CD4-positive, alpha-beta T cell (primary cell): ENCODE measurements at regions of chr14 and their contacts with region 1.

Region 1: DNA sequence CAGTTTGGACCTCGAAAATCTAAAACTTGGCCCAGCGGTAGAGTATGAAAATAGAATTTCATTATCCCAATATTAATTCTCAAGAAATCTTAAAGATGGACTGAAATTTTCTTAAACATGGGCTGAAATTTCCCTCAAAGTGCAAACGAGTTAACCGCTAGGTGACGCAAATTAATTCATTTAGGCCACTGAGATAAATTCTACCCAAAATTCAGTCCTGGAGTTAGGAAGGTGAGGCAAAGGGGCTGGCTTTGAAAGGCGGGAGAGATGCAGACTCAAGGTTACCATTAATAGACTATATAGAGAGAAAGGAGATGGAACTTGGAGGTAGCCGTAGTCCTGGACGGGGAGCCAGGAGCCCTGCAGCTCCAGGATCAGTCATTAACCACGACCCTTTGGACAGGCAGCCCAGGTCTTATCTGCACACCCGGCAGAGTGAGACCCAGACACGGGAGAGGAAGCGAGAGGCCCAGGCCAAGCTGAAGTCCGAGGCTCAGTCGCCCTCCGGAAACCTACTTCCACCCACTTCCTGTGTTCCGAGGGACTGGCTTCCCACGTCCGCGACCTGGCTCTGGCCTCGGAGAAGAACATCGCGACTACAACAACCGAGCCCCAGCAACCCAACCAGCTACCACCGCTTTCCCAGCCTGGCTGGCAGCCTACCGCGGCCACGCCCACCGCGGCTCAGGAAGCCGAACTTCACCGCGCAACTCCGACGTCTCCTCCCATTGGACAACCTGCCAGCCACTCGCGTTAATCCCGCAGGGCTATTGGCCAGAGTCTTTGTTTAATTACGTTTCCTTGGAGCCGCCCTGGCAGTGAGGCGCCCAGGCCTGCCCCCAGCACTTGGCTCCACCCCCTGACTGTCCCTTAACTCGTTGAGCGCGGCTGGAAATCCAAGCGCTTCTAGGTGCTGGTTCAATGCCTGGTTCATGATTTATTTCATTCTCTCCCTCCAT is at the start of gene EFCAB11:
- DNase-seq: peak; percentile 88 to 99 (median 92)
- ATAC-seq: peak; percentile 81
- H3K4me3 ChIP-seq: peak within 1 kb of the TSS; percentile 74
- H3K4me3 Mint-ChIP-seq: peak within 1 kb of the TSS; percentile 88
- H3K27ac ChIP-seq: peak within 1 kb of the TSS in 1 of 2 donors; percentile 40
- H3K27ac Mint-ChIP-seq: peak within 1 kb of the TSS; percentile 99
- H3K4me1 ChIP-seq: peaks cover 38% of the 10 kb centered on the region
- H3K4me1 Mint-ChIP-seq: peaks cover 39% of the 10 kb centered on the region
- H3K27me3 ChIP-seq: no peaks in the 10 kb centered on the region
- H3K27me3 Mint-ChIP-seq: no peaks in the 10 kb centered on the region
- CTCF ChIP-seq: no peak
- total RNA-seq, gene EFCAB11: 0.36 to 0.47 TPM

Region 2: DNA sequence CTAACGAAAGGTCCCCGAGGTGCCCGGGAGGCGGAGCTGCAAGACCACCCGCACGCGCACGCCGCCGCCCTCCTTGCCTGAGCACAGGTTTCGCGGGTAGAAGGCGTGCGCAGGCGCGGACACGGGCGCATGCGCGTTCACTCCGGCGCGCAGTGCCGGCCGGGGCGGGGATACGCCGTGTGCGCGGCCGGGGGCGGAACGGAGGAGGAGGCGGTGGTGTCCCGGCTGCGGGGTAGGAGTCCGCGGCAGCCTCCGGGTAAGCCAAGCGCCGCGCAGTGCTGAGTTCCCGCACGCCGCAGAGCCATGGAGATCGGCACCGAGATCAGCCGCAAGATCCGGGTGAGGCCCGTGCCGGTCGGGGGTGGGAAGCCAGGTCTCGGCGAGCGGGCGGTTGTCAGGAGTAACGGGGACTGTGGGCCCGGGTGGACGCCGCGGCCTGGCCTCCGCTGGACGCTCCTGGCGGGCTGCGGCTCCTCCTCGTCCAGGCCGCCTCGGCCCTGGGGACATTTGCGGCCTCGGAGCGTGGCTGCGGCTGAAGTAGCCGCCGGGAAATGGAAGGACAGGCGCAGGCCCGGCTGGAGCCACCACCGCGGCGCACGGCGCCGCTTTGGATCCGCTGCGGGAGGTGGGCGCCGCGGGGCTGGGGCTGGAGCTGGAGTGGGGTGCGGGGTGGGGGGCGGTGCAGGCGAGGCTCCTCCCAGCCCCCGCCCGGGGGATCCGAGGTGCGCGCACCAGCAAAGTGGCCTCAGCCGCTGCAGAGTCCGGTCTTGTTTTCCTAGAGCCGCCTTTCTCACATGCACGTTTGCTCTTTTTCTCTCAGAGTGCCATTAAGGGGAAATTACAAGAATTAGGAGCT is 1391.3 kb before region 1 on chr14 and contains the start of gene ZC3H14:
- CTCF ChIA-PET with region 1: no interaction called
- POLR2A ChIA-PET with region 1: no interaction called
- intact Hi-C with region 1: loop called in 1 of 2 experiments (anchors 10 kb)
- DNase-seq: peak; percentile 73 to 95 (median 84)
- ATAC-seq: peak; percentile 96
- H3K4me3 ChIP-seq: peak within 1 kb of the TSS; percentile 77
- H3K4me3 Mint-ChIP-seq: peak within 1 kb of the TSS; percentile 97
- H3K27ac ChIP-seq: peak within 1 kb of the TSS in 1 of 2 donors; percentile 35
- H3K27ac Mint-ChIP-seq: peak within 1 kb of the TSS; percentile 67
- H3K4me1 ChIP-seq: peaks cover 13% of the 10 kb centered on the region
- H3K4me1 Mint-ChIP-seq: peaks cover 37% of the 10 kb centered on the region
- H3K27me3 ChIP-seq: no peaks in the 10 kb centered on the region
- H3K27me3 Mint-ChIP-seq: peaks cover 8% of the 10 kb centered on the region
- CTCF ChIP-seq: no peak
- total RNA-seq, gene ZC3H14: 36.5 to 40.2 TPM

Region 3: GRCh38 chr14:89416002-89416995 is 538.0 kb before region 1 on chr14:
- CTCF ChIA-PET with region 1: no interaction called
- POLR2A ChIA-PET with region 1: no interaction called
- intact Hi-C with region 1: loop called (anchors 1 to 5 kb)
- DNase-seq: peak; percentile 97 to 100 (median 99)
- ATAC-seq: peak; percentile 73
- H3K4me3 ChIP-seq: peak overlapping the region; percentile 71
- H3K4me3 Mint-ChIP-seq: peak overlapping the region; percentile 96
- H3K27ac ChIP-seq: peak overlapping the region; percentile 51 to 62
- H3K27ac Mint-ChIP-seq: peak overlapping the region; percentile 96
- H3K4me1 ChIP-seq: peaks cover 26% of the 10 kb centered on the region
- H3K4me1 Mint-ChIP-seq: peaks cover 71% of the 10 kb centered on the region
- H3K27me3 ChIP-seq: no peaks in the 10 kb centered on the region
- H3K27me3 Mint-ChIP-seq: no peaks in the 10 kb centered on the region
- CTCF ChIP-seq: no peak

Region 4: GRCh38 chr14:89915114-89915878 is 39.1 kb before region 1 on chr14:
- CTCF ChIA-PET with region 1: no interaction called
- POLR2A ChIA-PET with region 1: no interaction called
- intact Hi-C with region 1: no loop called
- DNase-seq: peak; percentile 33 to 77 (median 54)
- ATAC-seq: peak; percentile 72
- H3K4me3 ChIP-seq: no peak overlapping the region
- H3K4me3 Mint-ChIP-seq: no peak overlapping the region
- H3K27ac ChIP-seq: no peak overlapping the region
- H3K27ac Mint-ChIP-seq: no peak overlapping the region
- H3K4me1 ChIP-seq: no peaks in the 10 kb centered on the region
- H3K4me1 Mint-ChIP-seq: peaks cover 4% of the 10 kb centered on the region
- H3K27me3 ChIP-seq: no peaks in the 10 kb centered on the region
- H3K27me3 Mint-ChIP-seq: peaks cover 13% of the 10 kb centered on the region
- CTCF ChIP-seq: peak; percentile 98

Region 5: DNA sequence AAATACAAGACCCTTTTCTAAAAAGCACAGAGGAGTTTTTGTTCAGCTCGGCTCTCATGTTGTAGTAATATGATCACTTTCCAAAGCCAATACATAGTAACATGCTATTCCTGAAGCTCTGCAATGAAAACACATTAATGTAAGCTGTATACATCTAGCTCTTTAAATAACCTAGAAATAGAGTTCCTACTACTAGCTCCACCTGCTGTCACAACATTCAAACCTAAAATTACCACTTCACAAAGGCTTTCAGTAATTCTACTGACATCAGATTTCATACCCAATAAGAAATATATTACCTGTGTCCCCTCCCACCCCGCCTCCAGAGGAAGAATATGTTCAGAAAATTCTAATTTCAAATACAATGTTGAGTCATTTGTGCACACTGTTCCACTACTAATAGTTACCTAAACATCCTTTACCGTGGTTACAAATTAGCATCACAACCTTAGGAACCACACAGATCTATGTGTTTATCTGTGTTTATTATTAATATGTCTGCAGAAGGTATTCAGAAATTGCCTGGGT is 17.6 kb before region 1 on chr14:
- CTCF ChIA-PET with region 1: interaction called, 21 read pairs
- POLR2A ChIA-PET with region 1: interaction called, 4 read pairs
- intact Hi-C with region 1: no loop called
- DNase-seq: no peak
- ATAC-seq: no peak
- H3K4me3 ChIP-seq: no peak overlapping the region
- H3K4me3 Mint-ChIP-seq: no peak overlapping the region
- H3K27ac ChIP-seq: no peak overlapping the region
- H3K27ac Mint-ChIP-seq: no peak overlapping the region
- H3K4me1 ChIP-seq: no peaks in the 10 kb centered on the region
- H3K4me1 Mint-ChIP-seq: no peaks in the 10 kb centered on the region
- H3K27me3 ChIP-seq: no peaks in the 10 kb centered on the region
- H3K27me3 Mint-ChIP-seq: no peaks in the 10 kb centered on the region
- CTCF ChIP-seq: no peak

Region 6: DNA sequence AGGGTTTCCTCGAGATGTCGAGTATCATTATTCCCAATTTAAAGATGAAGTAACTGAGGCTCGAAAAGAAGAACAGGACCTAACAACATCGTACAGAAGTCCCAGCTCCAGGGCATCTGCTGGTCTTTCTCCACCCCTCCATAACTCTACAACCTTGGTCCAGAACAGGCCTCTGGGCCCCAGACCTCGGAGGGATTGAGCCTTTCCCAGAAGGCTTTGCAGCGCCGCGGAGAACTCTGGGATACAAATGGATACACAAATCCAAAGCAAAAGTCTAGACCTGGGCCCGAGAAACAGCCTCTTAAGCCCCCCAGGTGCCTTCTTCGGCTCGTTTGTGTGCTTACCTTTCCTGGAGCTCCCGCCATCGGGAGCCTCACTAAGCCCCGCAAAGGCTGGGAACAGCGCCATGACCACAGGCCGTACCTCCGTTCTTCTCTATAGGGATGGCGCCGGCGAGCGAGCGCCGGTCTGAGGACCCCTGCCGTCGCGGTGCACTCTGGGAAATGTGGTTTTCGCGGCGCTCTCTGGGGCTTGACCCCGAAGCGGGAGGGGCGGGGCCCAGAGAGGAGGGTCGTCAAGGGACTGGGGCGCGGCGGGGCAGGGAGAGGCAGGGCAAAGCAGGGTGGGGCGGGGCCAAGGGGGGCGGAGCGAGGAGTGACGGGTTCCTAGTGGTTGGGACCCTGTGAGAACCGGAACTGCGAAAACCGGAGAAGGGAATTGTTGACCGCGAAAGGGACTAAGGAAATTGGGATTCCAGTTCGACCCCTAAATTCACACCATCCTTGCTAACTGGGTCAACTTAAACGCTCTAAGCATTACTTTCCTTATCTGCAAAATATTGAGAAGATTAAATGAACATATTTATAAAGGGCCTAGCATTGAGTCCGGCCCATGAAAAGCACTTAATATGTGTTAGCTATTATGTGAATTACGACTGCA is 377.4 kb after region 1 on chr14 and contains the start of gene NRDE2:
- CTCF ChIA-PET with region 1: no interaction called
- POLR2A ChIA-PET with region 1: no interaction called
- intact Hi-C with region 1: loop called in 1 of 2 experiments (anchors 5 kb)
- DNase-seq: peak; percentile 81 to 99 (median 93)
- ATAC-seq: peak; percentile 95
- H3K4me3 ChIP-seq: peak within 1 kb of the TSS; percentile 83
- H3K4me3 Mint-ChIP-seq: peak within 1 kb of the TSS; percentile 93
- H3K27ac ChIP-seq: peak within 1 kb of the TSS; percentile 60 to 72
- H3K27ac Mint-ChIP-seq: peak within 1 kb of the TSS; percentile 93
- H3K4me1 ChIP-seq: peaks cover 13% of the 10 kb centered on the region
- H3K4me1 Mint-ChIP-seq: peaks cover 40% of the 10 kb centered on the region
- H3K27me3 ChIP-seq: no peaks in the 10 kb centered on the region
- H3K27me3 Mint-ChIP-seq: peaks cover 11% of the 10 kb centered on the region
- CTCF ChIP-seq: no peak
- total RNA-seq, gene NRDE2: 17.5 to 17.9 TPM

Region 7: DNA sequence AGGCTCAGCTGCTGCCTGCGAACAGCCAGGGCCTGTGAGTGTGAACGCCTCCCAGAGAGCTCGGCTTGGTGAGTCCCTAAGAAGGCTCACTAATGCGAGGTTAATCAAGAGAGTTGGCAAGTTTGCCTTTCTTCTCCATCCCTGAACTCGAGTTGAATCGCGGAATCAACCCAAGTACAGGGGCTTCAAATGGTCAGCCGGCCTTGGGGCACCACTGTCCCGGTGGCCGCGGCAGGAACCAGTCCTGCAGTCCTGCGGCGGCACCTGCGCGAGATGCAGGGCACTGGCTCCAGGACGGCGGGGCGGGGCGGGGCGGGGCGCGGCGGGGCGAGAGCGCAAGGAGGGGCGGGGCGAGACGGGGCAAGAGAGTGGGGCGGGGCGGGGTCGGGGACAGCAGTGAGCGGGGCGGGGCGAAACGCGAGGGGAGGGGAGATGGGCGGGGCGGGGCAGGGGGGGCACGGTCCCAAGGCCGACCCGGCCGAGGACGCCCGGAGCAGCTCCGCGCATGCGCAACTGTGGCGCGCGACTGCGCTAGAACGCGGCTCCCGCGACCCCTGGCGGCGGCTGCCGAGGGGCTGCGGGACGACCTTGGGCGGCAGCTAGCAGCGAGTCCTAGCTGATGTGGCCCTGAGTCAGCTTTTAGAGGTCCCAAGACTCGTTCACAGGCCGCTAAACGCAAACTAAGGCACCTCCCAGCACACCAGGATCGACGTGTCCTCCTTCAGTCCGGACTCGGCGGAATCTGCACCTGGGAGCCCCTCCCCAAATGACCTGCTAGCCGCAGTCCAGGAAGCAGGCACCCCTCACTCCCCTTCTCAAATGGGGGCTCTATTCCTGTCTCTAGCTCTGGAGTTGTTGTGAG is 803.9 kb after region 1 on chr14:
- CTCF ChIA-PET with region 1: no interaction called
- POLR2A ChIA-PET with region 1: interaction called, 11 read pairs
- intact Hi-C with region 1: loop called in 1 of 2 experiments (anchors 5 kb)
- DNase-seq: peak; percentile 82 to 99 (median 94)
- ATAC-seq: peak; percentile 83
- H3K4me3 ChIP-seq: peak overlapping the region; percentile 66
- H3K4me3 Mint-ChIP-seq: peak overlapping the region; percentile 91
- H3K27ac ChIP-seq: peak overlapping the region; percentile 63 to 84
- H3K27ac Mint-ChIP-seq: peak overlapping the region; percentile 89
- H3K4me1 ChIP-seq: peaks cover 21% of the 10 kb centered on the region
- H3K4me1 Mint-ChIP-seq: peaks cover 23% of the 10 kb centered on the region
- H3K27me3 ChIP-seq: no peaks in the 10 kb centered on the region
- H3K27me3 Mint-ChIP-seq: no peaks in the 10 kb centered on the region
- CTCF ChIP-seq: peak; percentile 88